RWPE1 (cell line): ENCODE measurements at regions of chr16 and their contacts with region 1.

Region 1: GRCh38 chr16:58494981-58495520 is 4.9 kb upstream of the NDRG4 start:
- DNase-seq: peak; percentile 89
- H3K27ac ChIP-seq: no peak overlapping the region
- CTCF ChIP-seq: 0 out of 2 replicates have a peak, but pooled peaks have one; percentile 23

Region 2: DNA sequence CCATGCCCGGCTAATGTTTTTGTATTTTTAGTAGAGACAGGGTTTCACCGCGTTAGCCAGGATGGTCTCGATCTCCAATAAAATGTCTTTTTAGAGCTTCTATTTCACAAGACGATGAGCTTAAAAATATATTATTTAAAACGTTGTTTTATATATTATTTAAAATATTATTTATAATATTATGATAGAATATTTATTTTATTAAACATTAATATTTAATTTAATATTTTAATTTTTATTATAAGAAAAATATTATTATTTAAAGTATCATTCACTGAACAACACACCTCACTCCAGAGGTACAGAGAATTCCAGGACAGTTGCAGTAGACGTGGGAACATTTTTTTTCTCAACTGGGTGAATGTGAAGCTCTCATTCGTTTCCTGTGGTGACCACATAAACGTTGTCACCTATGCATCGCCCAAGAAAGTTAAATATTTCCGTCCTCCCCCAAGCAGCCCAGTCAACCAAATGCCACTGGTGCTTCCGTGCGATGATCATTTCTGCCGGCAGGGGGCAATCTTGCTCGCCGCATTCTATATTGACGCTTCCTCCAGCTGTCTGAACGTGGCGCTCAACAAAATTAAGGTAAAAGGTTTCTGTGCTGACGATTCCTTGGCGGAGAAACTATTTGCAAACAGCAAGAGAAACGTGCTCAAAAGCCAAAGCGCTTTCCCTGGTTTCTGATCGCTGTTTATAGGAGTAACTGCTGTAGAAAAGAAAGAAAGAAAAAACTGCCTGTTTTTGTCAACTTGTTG is 158.5 kb before region 1 on chr16:
- CTCF ChIA-PET with region 1: interaction called, 18 read pairs
- POLR2A ChIA-PET with region 1: no interaction called
- DNase-seq: peak; percentile 76
- H3K27ac ChIP-seq: no peak overlapping the region
- CTCF ChIP-seq: peak; percentile 91